Aorta (tissue), 5 donors: ENCODE measurements at regions of chr11 and their contacts with region 1.

Region 1: GRCh38 chr11:114921697-114922096 is 243.4 kb downstream of the NXPE2 start:
- DNase-seq: no peak
- ATAC-seq: no peak
- H3K4me3 ChIP-seq: no peak overlapping the region
- H3K27ac ChIP-seq: no peak overlapping the region
- H3K4me1 ChIP-seq: no peaks in the 10 kb centered on the region
- H3K27me3 ChIP-seq: no peaks in the 10 kb centered on the region

Region 2: DNA sequence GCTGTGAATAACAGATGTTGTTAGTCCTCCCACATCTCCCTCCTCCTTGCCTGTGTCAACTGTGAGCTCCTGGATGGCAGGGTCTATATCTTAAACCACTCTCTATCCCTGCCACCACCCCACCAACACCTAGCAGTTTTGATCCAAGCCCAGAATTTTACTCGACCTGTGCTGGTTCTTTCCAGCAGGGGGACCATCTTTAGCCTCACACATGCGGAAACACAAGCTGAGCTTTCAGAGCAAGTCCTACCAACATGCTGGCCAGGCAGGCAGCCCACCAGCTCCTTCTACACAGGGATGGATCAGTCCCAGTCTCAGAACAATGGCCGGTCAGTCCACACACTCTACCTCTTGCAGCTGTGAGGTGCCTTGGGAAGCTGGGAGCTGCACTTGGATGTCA is 11.8 kb before region 1 on chr11:
- intact Hi-C with region 1: loop called in 1 of 2 experiments (anchors 1 kb)
- DNase-seq: no peak
- ATAC-seq: no peak
- H3K4me3 ChIP-seq: no peak overlapping the region
- H3K27ac ChIP-seq: no peak overlapping the region
- H3K4me1 ChIP-seq: no peaks in the 10 kb centered on the region
- H3K27me3 ChIP-seq: no peaks in the 10 kb centered on the region

Region 3: GRCh38 chr11:115017529-115017928 is 95.8 kb after region 1 on chr11:
- intact Hi-C with region 1: no loop called
- DNase-seq: no peak
- ATAC-seq: no peak
- H3K4me3 ChIP-seq: no peak overlapping the region
- H3K27ac ChIP-seq: no peak overlapping the region
- H3K4me1 ChIP-seq: no peaks in the 10 kb centered on the region
- H3K27me3 ChIP-seq: no peaks in the 10 kb centered on the region